ENCODE measurements at regions of chr13 and their contacts with region 1.

Region 1: DNA sequence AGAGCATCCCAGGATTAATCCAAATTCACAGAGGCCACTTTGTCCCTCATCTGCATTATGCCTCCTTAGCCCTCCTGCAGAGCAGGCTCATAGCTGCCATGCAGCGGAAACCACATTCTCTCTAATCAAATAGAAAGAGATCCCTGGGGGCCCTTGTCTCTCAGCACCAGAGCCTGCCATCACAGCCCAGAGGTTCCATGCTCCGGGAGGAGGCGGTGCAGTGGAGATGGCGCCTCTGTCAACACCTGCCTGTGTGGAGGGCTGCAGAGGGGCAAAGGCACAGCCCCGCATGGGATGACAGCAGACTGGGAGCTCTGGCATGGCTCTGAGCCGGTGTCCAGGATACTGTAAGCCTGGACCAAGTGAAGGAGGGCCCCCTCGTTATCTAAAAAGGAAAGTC is 111.3 kb downstream of the SLC7A1 start:
- DNase-seq: no peak
- ATAC-seq: no peak
- H3K4me3 Mint-ChIP-seq: no peak overlapping the region
- H3K27ac Mint-ChIP-seq: no peak overlapping the region
- H3K4me1 Mint-ChIP-seq: no peaks in the 10 kb centered on the region
- H3K27me3 Mint-ChIP-seq: peaks cover 9% of the 10 kb centered on the region
- CTCF ChIP-seq: no peak

Region 2: DNA sequence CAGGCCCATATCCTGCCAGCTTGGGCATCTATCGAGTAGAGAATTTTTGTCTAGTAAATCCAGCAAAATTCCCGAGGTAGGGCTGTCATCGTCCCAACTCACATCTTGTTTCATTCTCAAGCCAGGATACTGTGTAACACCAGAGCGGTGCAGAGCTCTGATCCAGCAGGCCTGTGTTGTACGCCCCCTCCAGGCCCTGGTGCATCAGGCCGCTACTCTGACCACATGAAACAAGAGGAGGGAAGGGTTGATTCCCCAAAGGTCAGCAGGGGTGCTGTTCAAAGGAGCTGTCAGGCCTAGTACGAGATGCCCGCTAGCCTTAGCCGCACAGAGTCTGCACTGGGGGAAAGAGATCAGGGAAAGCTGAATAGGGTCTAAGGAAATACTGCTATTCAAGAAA is 164.8 kb before region 1 on chr13:
- CTCF ChIA-PET with region 1: no interaction called
- POLR2A ChIA-PET with region 1: no interaction called
- intact Hi-C with region 1: no loop called
- DNase-seq: no peak
- ATAC-seq: no peak
- H3K4me3 Mint-ChIP-seq: no peak overlapping the region
- H3K27ac Mint-ChIP-seq: no peak overlapping the region
- H3K4me1 Mint-ChIP-seq: no peaks in the 10 kb centered on the region
- H3K27me3 Mint-ChIP-seq: no peaks in the 10 kb centered on the region
- CTCF ChIP-seq: no peak

Region 3: DNA sequence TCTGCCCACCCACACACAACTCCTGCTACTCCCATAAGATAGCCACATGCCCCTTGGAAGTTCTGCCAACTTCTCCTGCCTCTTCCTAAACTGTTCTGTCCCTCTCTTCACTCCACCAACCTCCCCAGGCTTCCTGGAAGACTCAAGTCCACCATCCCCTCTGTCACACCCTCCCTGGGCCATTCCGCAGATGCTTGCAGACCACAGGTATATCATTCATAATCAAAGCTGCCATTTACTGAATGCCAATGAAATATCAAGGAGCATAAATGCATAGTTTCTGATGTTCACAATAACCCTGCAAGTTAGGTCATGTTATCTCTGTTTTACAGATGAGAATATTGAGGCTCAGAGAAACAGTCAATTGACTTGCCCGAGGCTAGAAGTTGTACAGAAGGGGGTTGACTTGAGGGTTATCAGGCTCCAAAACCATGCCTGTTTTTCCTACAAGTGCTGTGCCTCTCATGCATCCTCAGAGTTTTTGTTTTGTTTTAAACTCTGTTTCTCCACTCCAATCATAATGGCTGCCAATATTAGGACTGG is 24.4 kb before region 1 on chr13:
- CTCF ChIA-PET with region 1: no interaction called
- POLR2A ChIA-PET with region 1: no interaction called
- intact Hi-C with region 1: no loop called
- DNase-seq: no peak
- ATAC-seq: no peak
- H3K4me3 Mint-ChIP-seq: no peak overlapping the region
- H3K27ac Mint-ChIP-seq: no peak overlapping the region
- H3K4me1 Mint-ChIP-seq: no peaks in the 10 kb centered on the region
- H3K27me3 Mint-ChIP-seq: peaks cover 12% of the 10 kb centered on the region
- CTCF ChIP-seq: no peak

Region 4: DNA sequence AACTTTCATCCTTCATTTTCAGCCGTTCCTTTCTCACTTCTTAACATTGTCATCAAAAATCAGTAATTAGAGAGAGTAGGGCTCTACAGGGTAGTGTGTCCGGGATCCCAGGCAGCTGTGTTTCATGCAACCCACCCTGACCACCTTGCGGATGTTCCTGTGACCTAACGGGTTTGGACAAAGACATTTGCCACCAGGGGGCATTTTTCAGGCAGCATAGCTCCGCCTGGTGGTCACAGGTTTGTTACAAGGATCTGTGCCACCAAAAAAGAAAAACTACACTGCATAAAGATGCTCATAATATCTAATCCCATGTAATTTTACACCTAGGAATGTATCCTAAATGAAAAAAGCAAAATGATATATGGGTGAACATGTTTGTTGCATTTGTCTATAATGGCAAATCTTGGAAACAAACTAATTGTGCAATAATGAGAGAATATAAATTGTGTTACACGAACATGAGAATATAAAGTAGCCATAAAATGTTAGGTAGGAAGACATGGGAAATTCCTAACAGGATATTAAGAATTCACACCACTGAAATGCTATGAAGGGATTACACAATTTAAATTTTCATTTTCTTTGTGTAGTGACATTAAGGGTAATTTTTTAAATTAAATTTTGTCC is 11.8 kb before region 1 on chr13:
- CTCF ChIA-PET with region 1: interaction called, 10 read pairs
- POLR2A ChIA-PET with region 1: no interaction called
- intact Hi-C with region 1: no loop called
- DNase-seq: peak; percentile 73
- ATAC-seq: peak; percentile 58
- H3K4me3 Mint-ChIP-seq: no peak overlapping the region
- H3K27ac Mint-ChIP-seq: no peak overlapping the region
- H3K4me1 Mint-ChIP-seq: no peaks in the 10 kb centered on the region
- H3K27me3 Mint-ChIP-seq: peaks cover 2% of the 10 kb centered on the region
- CTCF ChIP-seq: peak; percentile 95